ENCODE measurements at regions of chr6 and their contacts with region 1.

Region 1: DNA sequence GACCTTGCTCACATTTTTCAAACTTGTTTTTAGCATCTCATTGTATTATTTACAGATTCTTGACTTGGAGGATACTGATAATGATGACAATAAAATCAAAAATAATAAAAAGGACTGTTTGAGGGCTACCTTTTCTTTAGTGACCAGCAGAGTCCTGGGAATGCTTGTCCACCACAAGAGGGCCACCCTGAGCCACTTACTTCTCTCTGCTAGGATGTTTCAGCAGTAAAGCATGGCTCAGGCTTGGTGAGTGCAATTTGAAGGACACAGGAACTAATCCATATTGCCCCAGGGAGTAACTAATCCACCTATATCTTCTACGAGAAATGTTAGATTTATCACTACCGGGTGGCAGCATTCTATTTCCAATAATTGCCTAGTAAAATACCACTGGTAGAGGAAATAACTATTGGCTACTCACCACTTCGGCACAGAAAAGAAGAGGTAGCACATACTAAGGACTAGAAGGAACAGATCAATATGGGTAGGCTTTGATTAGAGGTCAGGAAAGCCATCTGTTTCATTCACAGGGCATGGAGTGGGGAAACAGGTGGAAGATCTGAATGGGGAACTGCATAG is 5.8 kb upstream of the KIAA0408 start:
- DNase-seq: peak in 2 of 4 donors; percentile 76 to 78
- ATAC-seq: peak; percentile 90
- H3K4me3 ChIP-seq: no peak overlapping the region
- H3K27ac ChIP-seq: peak overlapping the region; percentile 70 to 80
- H3K4me1 ChIP-seq: peaks cover 0 to 15% of the 10 kb centered on the region in 2 donors
- H3K27me3 ChIP-seq: no peaks in the 10 kb centered on the region
- CTCF ChIP-seq: peak; percentile 67 to 76

Region 2: DNA sequence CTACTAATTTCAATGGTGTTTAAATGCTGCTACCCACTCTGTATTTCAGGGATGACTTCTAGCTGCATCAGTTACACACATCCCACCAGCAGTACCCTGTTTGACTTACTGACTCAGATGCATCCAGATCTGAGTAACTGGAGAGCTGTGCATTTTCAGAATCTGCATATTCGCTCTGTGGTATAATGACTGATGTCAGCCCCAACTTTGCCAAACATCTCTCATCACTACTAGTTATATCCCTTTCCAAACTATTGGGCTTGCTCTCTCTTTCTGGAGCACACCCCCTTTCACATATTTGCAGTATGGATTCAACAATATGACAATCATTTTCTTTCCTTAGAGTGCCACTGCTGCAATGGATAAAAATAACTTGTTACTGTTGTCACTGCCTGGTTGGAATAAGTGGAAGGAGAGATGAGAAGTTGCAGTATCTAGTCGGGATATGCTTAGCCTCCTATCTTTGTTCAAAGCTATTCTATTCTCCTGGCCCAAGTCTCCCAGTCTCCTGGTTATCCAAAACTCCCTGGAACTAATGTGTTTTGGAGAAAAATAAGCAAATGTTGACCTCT is 349.8 kb before region 1 on chr6:
- intact Hi-C with region 1: no loop called
- DNase-seq: no peak
- ATAC-seq: no peak
- H3K4me3 ChIP-seq: no peak overlapping the region
- H3K27ac ChIP-seq: no peak overlapping the region
- H3K4me1 ChIP-seq: peaks cover 6 to 20% of the 10 kb centered on the region in 2 donors
- H3K27me3 ChIP-seq: peaks cover 14 to 54% of the 10 kb centered on the region in 2 donors
- CTCF ChIP-seq: no peak

Region 3: DNA sequence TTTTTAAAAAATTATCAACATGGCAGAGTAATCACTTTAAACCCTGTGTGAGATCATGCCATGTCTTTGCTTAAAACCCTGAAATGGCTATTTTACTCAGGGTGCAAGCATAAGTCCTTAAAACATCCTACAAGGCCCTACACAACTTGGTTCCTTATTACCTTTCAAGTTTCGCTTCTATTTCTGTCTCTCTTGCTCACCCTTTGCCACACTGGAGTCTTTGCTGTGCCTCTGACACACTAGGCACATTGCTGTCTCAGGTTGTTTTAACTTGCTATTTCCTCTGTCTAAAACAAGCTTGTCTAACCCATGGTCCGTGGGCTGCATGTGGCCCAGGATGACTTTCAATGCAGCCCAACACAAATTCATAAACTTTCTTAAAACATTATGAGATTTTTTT is 61.3 kb before region 1 on chr6:
- intact Hi-C with region 1: no loop called
- DNase-seq: no peak
- ATAC-seq: no peak
- H3K4me3 ChIP-seq: no peak overlapping the region
- H3K27ac ChIP-seq: no peak overlapping the region
- H3K4me1 ChIP-seq: no peaks in the 10 kb centered on the region
- H3K27me3 ChIP-seq: no peaks in the 10 kb centered on the region
- CTCF ChIP-seq: no peak

Region 4: GRCh38 chr6:127516666-127517273 is 51.8 kb after region 1 on chr6:
- intact Hi-C with region 1: loop called in 1 of 2 experiments (anchors 10 kb)
- DNase-seq: no peak
- ATAC-seq: peak; percentile 63
- H3K4me3 ChIP-seq: peak overlapping the region; percentile 54 to 61
- H3K27ac ChIP-seq: no peak overlapping the region
- H3K4me1 ChIP-seq: peaks cover 0 to 31% of the 10 kb centered on the region in 2 donors
- H3K27me3 ChIP-seq: peaks cover 51 to 97% of the 10 kb centered on the region in 2 donors
- CTCF ChIP-seq: peak; percentile 45 to 65

Region 5: DNA sequence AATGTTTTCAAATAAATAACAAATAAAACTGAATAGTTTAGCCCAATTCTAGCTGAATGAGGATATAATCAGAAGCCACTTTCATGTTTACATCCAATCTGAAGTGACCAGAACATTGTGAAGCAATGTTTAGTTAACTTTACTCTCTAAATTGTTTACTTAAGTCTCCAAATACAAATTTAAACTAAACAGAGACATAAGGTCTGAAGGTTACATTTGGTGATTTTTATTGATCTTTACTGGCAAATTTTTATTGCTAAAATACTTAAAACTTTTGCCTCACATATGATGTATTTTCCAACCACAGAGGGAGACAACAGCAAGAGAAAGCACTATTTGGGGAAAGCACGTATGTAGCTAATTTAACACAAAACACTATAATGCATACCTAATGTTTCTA is 542.7 kb after region 1 on chr6:
- intact Hi-C with region 1: no loop called
- DNase-seq: no peak
- ATAC-seq: no peak
- H3K4me3 ChIP-seq: no peak overlapping the region
- H3K27ac ChIP-seq: no peak overlapping the region
- H3K4me1 ChIP-seq: peaks cover 0 to 4% of the 10 kb centered on the region in 2 donors
- H3K27me3 ChIP-seq: no peaks in the 10 kb centered on the region
- CTCF ChIP-seq: no peak